GM12878 (cell line): ENCODE measurements at regions of chr6 and their contacts with region 1.

Region 1: GRCh38 chr6:15327271-15327670 is 81.4 kb downstream of the JARID2 start:
- DNase-seq: no peak
- ATAC-seq: peak; percentile 66
- H3K4me3 ChIP-seq: no peak overlapping the region; the same call in 1 of the 2 replicates
- H3K27ac ChIP-seq: peak overlapping the region; percentile 72
- H3K4me1 ChIP-seq: peaks cover 69% of the 10 kb centered on the region
- H3K27me3 ChIP-seq: no peaks in the 10 kb centered on the region
- CTCF ChIP-seq: peak; percentile 57 to 62 (median 60)
- EP300 ChIP-seq: no peak
- POLR2A ChIP-seq: no peak
- RAD21 ChIP-seq: peak; percentile 64

Region 2: DNA sequence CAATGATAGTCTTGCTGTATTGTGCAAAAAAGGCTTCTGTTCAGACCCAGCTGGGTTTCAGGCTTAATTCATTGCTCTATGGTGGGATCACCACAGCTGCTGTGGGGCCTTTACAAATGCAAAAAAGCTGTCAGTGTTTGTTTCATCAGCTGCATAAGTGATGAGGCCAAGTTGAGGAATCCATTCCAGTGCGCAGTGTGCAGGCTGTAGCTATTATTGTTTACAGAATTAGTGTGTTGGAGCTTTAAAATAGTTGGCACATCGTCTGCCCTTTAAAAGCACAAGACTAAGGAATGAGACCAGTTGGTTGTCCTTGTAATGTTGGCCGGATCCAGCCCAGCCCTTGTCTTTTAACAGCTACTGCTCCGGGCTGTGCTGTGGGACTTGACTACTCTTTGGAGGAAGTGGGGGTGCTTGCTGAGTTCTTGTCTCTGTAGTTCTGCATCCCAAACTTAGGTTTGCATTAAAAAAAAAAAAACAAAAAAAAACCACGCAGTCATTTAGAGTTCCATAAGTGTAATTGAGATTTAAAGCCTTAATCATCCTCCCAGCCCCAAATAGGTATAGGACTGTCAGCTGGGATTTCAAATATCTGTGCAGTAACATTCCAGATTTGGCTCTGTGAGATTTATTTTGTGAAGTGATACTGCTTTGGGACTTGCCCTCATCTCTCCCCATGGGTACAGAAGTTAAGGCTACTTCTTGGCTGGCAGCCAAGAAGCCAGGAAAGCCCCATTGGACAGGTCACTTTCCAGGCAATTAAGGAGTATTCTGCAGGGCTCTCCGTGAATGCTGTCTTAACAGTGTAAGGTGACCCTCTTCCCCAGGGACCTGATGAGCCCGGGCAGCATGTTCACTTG is 62.1 kb before region 1 on chr6:
- CTCF ChIA-PET with region 1: interaction called, 10 read pairs
- POLR2A ChIA-PET with region 1: interaction called, 6 read pairs
- RAD21 ChIA-PET with region 1: interaction called, 12 read pairs
- SMC1A ChIA-PET with region 1: interaction called, 29 read pairs
- in situ Hi-C with region 1: no loop called
- intact Hi-C with region 1: no loop called
- DNase-seq: no peak
- ATAC-seq: peak; percentile 45
- H3K4me3 ChIP-seq: peak overlapping the region; percentile 26; the same call in 1 of the 2 replicates
- H3K27ac ChIP-seq: peak overlapping the region; percentile 62
- H3K4me1 ChIP-seq: peaks cover 61% of the 10 kb centered on the region
- H3K27me3 ChIP-seq: no peaks in the 10 kb centered on the region
- CTCF ChIP-seq: no peak
- EP300 ChIP-seq: no peak
- POLR2A ChIP-seq: no peak
- RAD21 ChIP-seq: no peak

Region 3: DNA sequence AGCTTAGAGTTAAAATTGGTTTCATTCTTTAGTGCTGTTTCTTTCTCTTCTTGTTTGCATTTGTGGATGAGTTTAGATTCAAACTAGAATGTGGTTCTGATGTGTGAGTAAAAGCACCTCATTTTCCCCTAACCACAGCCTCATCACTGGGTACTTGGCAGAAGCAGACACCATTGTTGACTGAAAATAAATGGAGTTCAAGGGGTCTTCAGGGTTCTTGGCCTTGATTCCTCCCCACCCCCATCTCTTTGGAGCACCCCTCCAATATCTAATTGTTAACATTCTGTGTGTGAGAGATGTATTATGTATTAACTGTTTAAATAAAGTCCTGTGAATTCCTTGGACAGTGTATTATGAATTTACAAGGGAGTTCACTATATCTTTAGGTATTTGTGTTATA is 21.8 kb before region 1 on chr6:
- CTCF ChIA-PET with region 1: interaction called, 6 read pairs
- POLR2A ChIA-PET with region 1: interaction called, 9 read pairs
- RAD21 ChIA-PET with region 1: interaction called, 59 read pairs
- SMC1A ChIA-PET with region 1: interaction called, 301 read pairs
- in situ Hi-C with region 1: no loop called
- intact Hi-C with region 1: loop called (anchors 2 kb)
- DNase-seq: no peak
- ATAC-seq: peak; percentile 67
- H3K4me3 ChIP-seq: peak overlapping the region; percentile 37; the same call in 1 of the 2 replicates
- H3K27ac ChIP-seq: peak overlapping the region; percentile 87
- H3K4me1 ChIP-seq: peaks cover 68% of the 10 kb centered on the region
- H3K27me3 ChIP-seq: no peaks in the 10 kb centered on the region
- CTCF ChIP-seq: no peak
- EP300 ChIP-seq: peak in 1 of 2 experiments; percentile 55; a peak in 2 of 4 replicates
- POLR2A ChIP-seq: no peak
- RAD21 ChIP-seq: no peak

Region 4: GRCh38 chr6:15351631-15352030 is 24.4 kb after region 1 on chr6:
- CTCF ChIA-PET with region 1: interaction called, 15 read pairs
- POLR2A ChIA-PET with region 1: interaction called, 5 read pairs
- RAD21 ChIA-PET with region 1: interaction called, 10 read pairs
- SMC1A ChIA-PET with region 1: interaction called, 60 read pairs
- in situ Hi-C with region 1: no loop called
- intact Hi-C with region 1: no loop called
- DNase-seq: no peak
- ATAC-seq: no peak
- H3K4me3 ChIP-seq: no peak overlapping the region
- H3K27ac ChIP-seq: peak overlapping the region; percentile 65
- H3K4me1 ChIP-seq: peaks cover 39% of the 10 kb centered on the region
- H3K27me3 ChIP-seq: no peaks in the 10 kb centered on the region
- CTCF ChIP-seq: no peak
- EP300 ChIP-seq: no peak
- POLR2A ChIP-seq: no peak
- RAD21 ChIP-seq: no peak

Region 5: GRCh38 chr6:15420959-15421438 is 93.7 kb after region 1 on chr6:
- CTCF ChIA-PET with region 1: interaction called, 12 read pairs
- POLR2A ChIA-PET with region 1: interaction called, 4 read pairs
- RAD21 ChIA-PET with region 1: interaction called, 10 read pairs
- SMC1A ChIA-PET with region 1: interaction called, 16 read pairs
- in situ Hi-C with region 1: no loop called
- intact Hi-C with region 1: no loop called
- DNase-seq: no peak
- ATAC-seq: peak; percentile 88
- H3K4me3 ChIP-seq: peak overlapping the region; percentile 59
- H3K27ac ChIP-seq: peak overlapping the region; percentile 90
- H3K4me1 ChIP-seq: peaks cover 29% of the 10 kb centered on the region
- H3K27me3 ChIP-seq: no peaks in the 10 kb centered on the region
- CTCF ChIP-seq: no peak
- EP300 ChIP-seq: 0 out of 4 replicates have a peak, but pooled peaks of 1 of the 2 experiments have one; percentile 9
- POLR2A ChIP-seq: no peak
- RAD21 ChIP-seq: no peak

Region 6: DNA sequence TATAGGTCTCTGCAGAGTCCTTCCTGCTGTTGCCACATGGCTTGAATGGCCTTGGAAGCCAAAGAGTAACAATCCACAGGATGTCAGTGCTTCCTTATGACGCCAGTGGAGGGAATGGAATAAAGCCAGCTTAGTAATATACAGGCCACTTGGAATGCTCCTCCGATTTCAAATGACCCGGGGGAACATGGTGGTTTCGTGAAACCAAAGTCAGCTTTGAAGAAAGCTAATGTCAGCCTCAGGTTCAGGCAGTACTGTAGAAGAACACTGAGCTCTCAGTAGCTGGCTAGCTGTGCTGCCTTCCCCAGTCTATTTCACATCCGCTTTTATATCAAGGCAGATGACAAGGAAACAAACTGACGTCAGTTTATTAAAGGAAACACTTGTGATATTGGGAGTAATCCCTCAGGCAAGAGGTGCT is 146.5 kb after region 1 on chr6:
- CTCF ChIA-PET with region 1: no interaction called
- POLR2A ChIA-PET with region 1: no interaction called
- RAD21 ChIA-PET with region 1: no interaction called
- SMC1A ChIA-PET with region 1: no interaction called
- in situ Hi-C with region 1: no loop called
- intact Hi-C with region 1: no loop called
- DNase-seq: no peak
- ATAC-seq: no peak
- H3K4me3 ChIP-seq: no peak overlapping the region
- H3K27ac ChIP-seq: no peak overlapping the region
- H3K4me1 ChIP-seq: no peaks in the 10 kb centered on the region
- H3K27me3 ChIP-seq: no peaks in the 10 kb centered on the region
- CTCF ChIP-seq: no peak
- EP300 ChIP-seq: no peak
- POLR2A ChIP-seq: no peak
- RAD21 ChIP-seq: no peak

Region 7: DNA sequence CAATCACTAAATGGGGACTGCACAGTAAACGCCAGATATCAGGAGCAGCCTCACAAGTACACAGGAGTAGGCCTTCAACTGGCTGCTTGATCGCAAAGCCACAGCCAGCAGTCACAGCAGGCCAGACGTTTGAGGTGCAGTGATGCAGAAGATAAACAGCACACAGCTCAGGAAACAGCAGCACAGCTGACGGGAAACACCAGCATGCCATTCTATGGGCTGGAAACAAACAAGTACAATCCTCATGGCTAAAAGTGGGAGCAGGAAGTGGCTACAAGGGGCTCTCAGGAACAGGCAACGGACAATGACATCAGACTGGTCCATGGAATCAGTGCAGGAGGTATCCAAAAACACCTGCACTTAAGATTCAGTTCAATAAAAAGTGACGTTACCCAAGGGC is 224.5 kb after region 1 on chr6:
- CTCF ChIA-PET with region 1: no interaction called
- POLR2A ChIA-PET with region 1: no interaction called
- RAD21 ChIA-PET with region 1: no interaction called
- SMC1A ChIA-PET with region 1: no interaction called
- in situ Hi-C with region 1: no loop called
- intact Hi-C with region 1: no loop called
- DNase-seq: no peak
- ATAC-seq: no peak
- H3K4me3 ChIP-seq: no peak overlapping the region
- H3K27ac ChIP-seq: no peak overlapping the region
- H3K4me1 ChIP-seq: peaks cover 7% of the 10 kb centered on the region
- H3K27me3 ChIP-seq: no peaks in the 10 kb centered on the region
- CTCF ChIP-seq: no peak
- EP300 ChIP-seq: no peak
- POLR2A ChIP-seq: no peak
- RAD21 ChIP-seq: no peak